PC-9 (cell line): ENCODE measurements at regions of chr1 and their contacts with region 1.

Region 1: DNA sequence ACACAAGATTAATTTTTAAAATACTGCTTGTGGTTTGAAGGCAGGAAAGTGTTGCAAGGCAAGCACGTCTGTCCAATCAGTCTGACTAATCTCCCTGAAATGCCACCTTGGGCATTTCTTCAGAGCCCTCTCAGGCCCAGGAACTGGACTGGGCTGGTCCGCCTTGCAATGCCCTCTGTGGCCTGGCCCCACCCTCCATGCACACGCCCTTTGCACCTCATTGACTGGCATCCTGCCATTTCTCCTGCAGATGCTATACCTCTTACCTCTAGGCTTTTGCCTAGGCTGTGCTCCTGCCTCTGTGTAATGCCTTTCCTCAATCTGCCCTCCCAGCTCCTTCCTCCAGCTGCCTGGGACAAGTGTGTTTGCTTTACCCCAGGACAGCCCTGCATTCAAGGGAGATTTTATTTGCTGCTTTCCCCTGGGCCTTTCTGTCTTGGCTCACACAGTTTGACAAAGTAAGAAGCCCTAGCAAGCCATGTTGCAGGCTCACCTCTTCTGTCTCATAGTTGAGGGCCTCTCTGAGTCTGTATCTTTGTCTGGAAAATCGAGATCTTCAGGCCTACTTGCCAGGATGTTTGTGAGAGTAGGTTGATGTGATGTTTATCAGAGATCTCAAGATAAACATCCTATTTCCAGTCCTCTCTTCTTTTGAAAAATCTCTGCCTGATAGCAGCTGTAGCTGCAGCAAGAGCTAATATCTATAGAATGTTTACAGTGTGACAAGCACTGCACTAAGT is 149.2 kb upstream of the JUN start:
- DNase-seq: peak; percentile 97 to 98
- H3K4me3 ChIP-seq: peak overlapping the region; percentile 13; the same call in 1 of the 2 replicates
- H3K27ac ChIP-seq: peak overlapping the region; percentile 94
- H3K4me1 ChIP-seq: peaks cover 76% of the 10 kb centered on the region
- H3K27me3 ChIP-seq: no peaks in the 10 kb centered on the region
- CTCF ChIP-seq: no peak

Region 2: GRCh38 chr1:57908147-57908890 is 1024.7 kb before region 1 on chr1:
- CTCF ChIA-PET with region 1: no interaction called
- POLR2A ChIA-PET with region 1: no interaction called
- intact Hi-C with region 1: no loop called
- DNase-seq: no peak
- H3K4me3 ChIP-seq: no peak overlapping the region
- H3K27ac ChIP-seq: no peak overlapping the region
- H3K4me1 ChIP-seq: no peaks in the 10 kb centered on the region
- H3K27me3 ChIP-seq: peaks cover 9% of the 10 kb centered on the region; the same call in 1 of the 2 replicates
- CTCF ChIP-seq: no peak

Region 3: GRCh38 chr1:58903514-58904298 is 29.3 kb before region 1 on chr1:
- CTCF ChIA-PET with region 1: no interaction called
- POLR2A ChIA-PET with region 1: interaction called, 6 read pairs
- intact Hi-C with region 1: loop called (anchors 2 kb)
- DNase-seq: peak; percentile 81 to 94
- H3K4me3 ChIP-seq: peak overlapping the region; percentile 63
- H3K27ac ChIP-seq: peak overlapping the region; percentile 90
- H3K4me1 ChIP-seq: peaks cover 69% of the 10 kb centered on the region
- H3K27me3 ChIP-seq: no peaks in the 10 kb centered on the region
- CTCF ChIP-seq: no peak

Region 4: DNA sequence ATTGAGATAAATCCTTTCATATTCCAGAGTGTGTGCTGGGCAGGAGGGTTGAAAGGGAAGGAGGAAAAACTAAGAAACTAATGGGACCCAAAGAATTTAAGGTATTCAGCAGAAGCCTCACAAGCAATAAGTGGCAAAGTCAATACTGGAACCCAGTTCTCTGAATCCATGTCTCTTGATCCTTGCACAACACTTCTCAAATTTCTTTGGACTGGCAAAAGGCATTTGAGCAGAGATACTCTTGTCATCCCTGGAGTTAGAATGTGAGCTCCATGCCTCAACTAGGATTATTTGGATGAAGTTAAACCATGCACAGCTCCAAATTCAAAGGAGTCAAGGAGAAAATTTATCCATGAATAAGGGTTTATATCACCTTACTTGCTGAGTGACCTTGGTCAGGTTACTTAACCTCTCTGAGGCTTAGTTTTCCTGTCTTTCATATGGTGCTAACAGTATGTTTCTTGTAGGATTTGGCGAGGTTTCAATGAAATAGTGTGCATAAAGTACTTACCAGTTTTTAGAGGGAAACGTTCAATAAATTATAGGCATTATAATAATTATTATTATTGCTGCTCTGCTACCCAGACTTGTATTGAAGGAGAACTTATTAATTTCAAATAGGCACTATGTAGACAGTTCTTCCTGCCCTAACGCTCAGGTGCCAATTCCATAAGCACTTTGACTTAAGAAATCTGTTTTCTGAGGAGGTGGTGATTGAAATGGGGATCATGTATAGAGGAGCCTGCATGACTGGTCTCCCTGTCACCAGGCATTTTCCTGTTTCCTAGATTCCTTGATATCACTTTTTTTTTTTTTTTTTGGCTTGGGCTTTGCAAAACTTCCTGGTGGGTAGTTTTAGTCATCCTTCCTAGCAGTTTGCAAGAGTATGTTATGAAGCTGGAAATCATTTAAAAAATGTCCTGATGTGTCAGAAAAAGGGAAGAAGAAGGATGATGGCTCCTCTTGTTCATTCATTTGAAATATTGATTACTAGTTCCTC is 24.2 kb before region 1 on chr1:
- CTCF ChIA-PET with region 1: no interaction called
- POLR2A ChIA-PET with region 1: interaction called, 4 read pairs
- intact Hi-C with region 1: loop called (anchors 1 kb)
- DNase-seq: peak; percentile 43 to 93
- H3K4me3 ChIP-seq: no peak overlapping the region
- H3K27ac ChIP-seq: peak overlapping the region; percentile 60
- H3K4me1 ChIP-seq: peaks cover 60% of the 10 kb centered on the region
- H3K27me3 ChIP-seq: no peaks in the 10 kb centered on the region
- CTCF ChIP-seq: no peak

Region 5: GRCh38 chr1:58917436-58917835 is 15.6 kb before region 1 on chr1:
- CTCF ChIA-PET with region 1: no interaction called
- POLR2A ChIA-PET with region 1: interaction called, 17 read pairs
- intact Hi-C with region 1: no loop called
- DNase-seq: no peak
- H3K4me3 ChIP-seq: no peak overlapping the region
- H3K27ac ChIP-seq: no peak overlapping the region
- H3K4me1 ChIP-seq: no peaks in the 10 kb centered on the region
- H3K27me3 ChIP-seq: no peaks in the 10 kb centered on the region
- CTCF ChIP-seq: no peak

Region 6: GRCh38 chr1:59025898-59026426 is 92.9 kb after region 1 on chr1:
- CTCF ChIA-PET with region 1: no interaction called
- POLR2A ChIA-PET with region 1: interaction called, 6 read pairs
- intact Hi-C with region 1: loop called (anchors 2 kb)
- DNase-seq: no peak
- H3K4me3 ChIP-seq: no peak overlapping the region
- H3K27ac ChIP-seq: no peak overlapping the region
- H3K4me1 ChIP-seq: peaks cover 46% of the 10 kb centered on the region
- H3K27me3 ChIP-seq: no peaks in the 10 kb centered on the region
- CTCF ChIP-seq: no peak

Region 7: GRCh38 chr1:59143133-59143487 is 210.1 kb after region 1 on chr1:
- CTCF ChIA-PET with region 1: no interaction called
- POLR2A ChIA-PET with region 1: interaction called, 4 read pairs
- intact Hi-C with region 1: loop called (anchors 2 kb)
- DNase-seq: peak; percentile 76 to 99
- H3K4me3 ChIP-seq: peak overlapping the region; percentile 14; the same call in 1 of the 2 replicates
- H3K27ac ChIP-seq: peak overlapping the region; percentile 94
- H3K4me1 ChIP-seq: peaks cover 87% of the 10 kb centered on the region
- H3K27me3 ChIP-seq: no peaks in the 10 kb centered on the region
- CTCF ChIP-seq: no peak

Region 8: GRCh38 chr1:59150577-59151391 is 217.8 kb after region 1 on chr1:
- CTCF ChIA-PET with region 1: no interaction called
- POLR2A ChIA-PET with region 1: no interaction called
- intact Hi-C with region 1: loop called (anchors 1 kb)
- DNase-seq: peak; percentile 82 to 92
- H3K4me3 ChIP-seq: peak overlapping the region; percentile 48
- H3K27ac ChIP-seq: peak overlapping the region; percentile 72
- H3K4me1 ChIP-seq: peaks cover 66% of the 10 kb centered on the region
- H3K27me3 ChIP-seq: no peaks in the 10 kb centered on the region
- CTCF ChIP-seq: no peak